Lower leg skin (tissue), 4 donors: ENCODE measurements at regions of chr4 and their contacts with region 1.

Region 1: DNA sequence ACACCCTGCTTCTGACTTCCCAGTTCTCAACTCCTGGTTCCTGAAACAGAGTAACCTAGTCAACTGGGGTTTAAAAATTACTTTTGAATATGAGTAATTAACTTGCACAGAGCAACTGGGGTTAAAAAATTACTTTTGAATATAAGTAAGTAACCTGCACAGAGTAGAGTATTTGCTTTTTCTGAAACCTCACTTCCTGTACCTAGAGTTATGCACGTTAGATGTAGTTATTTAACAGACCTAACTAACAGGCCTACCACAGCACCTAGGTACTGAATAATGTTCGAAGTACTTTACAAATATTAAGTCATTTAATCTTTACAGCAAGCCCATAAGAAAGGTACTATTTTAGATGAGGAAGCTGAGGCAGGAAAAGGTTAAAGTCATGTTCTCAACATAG is 32.8 kb downstream of the SLC39A8 start:
- DNase-seq: no peak
- H3K4me3 ChIP-seq: no peak overlapping the region
- CTCF ChIP-seq: no peak
- POLR2A ChIP-seq: no peak

Region 2: GRCh38 chr4:102268355-102268754 is 44.1 kb before region 1 on chr4:
- intact Hi-C with region 1: loop called (anchors 1 kb)
- DNase-seq: no peak
- H3K4me3 ChIP-seq: no peak overlapping the region
- CTCF ChIP-seq: no peak
- POLR2A ChIP-seq: no peak